Activated CD4-positive, alpha-beta T cell treated with anti-CD3 and anti-CD28 coated beads, Interleukin-2, amount 10 ng/mL, durations not matched to agents 24 days and 14 days (primary cell): ENCODE measurements at regions of chrX and their contacts with region 1.

Region 1: DNA sequence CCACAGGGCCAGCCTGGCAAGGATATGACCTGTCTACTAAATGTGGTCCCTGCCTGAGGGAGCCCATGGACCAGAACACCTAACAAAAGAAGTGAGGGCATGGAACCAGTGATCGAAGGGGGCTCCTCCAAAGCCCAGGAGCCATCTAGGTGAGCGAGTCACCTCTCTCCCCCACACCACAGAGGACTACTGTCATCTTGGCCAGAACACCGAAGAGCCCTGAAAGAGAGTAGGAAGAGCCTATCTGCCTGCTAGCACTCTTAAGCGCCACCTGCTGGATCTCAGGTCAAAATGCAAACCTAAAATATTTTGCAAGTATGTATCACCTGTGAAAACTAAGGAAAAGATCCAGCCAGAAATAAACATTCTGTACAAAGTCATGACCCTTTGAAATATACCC is 137.9 kb upstream of the ZXDB start:
- DNase-seq: peak; percentile 67
- H3K4me3 Mint-ChIP-seq: no peak overlapping the region
- H3K27ac Mint-ChIP-seq: no peak overlapping the region
- H3K4me1 Mint-ChIP-seq: peaks cover 4% of the 10 kb centered on the region
- H3K27me3 Mint-ChIP-seq: no peaks in the 10 kb centered on the region

Region 2: GRCh38 chrX:56802921-56803849 is 650.7 kb before region 1 on chrX:
- intact Hi-C with region 1: loop called (anchors 5 kb)
- DNase-seq: peak; percentile 86
- H3K4me3 Mint-ChIP-seq: peak overlapping the region; percentile 55
- H3K27ac Mint-ChIP-seq: peak overlapping the region; percentile 81
- H3K4me1 Mint-ChIP-seq: peaks cover 34% of the 10 kb centered on the region
- H3K27me3 Mint-ChIP-seq: no peaks in the 10 kb centered on the region

Region 3: DNA sequence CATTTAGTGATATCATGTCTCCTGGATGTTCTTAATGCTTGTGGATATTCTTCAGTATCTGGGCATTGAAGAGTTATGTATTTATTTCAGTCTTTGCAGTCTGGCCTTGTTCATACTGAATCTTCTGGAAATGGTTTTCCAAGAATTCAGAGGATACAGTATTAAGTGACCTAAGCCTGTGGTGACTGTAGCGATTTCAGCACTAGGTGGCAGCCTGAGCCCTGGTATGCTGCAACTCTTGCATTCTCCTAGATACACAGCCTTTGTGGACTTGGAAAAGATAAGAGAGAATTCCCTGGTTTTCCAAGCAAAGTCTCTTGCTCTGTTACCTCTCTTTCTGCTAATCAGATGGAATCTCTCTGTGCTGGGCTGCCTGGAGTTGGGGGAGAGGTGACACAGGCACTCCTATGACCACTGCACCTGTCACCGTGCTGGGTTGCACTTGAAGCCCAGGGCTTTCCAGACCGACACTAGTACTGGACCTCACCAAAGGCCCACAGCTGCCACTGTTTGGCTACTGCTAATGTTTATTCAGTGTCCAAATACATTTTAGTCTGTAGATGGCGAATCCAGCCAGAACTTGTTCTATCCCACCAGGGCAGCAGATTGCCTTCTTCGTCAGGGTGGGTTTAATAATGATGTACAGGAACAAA is 297.4 kb before region 1 on chrX:
- intact Hi-C with region 1: loop called (anchors 2 kb)
- DNase-seq: no peak
- H3K4me3 Mint-ChIP-seq: no peak overlapping the region
- H3K27ac Mint-ChIP-seq: no peak overlapping the region
- H3K4me1 Mint-ChIP-seq: no peaks in the 10 kb centered on the region
- H3K27me3 Mint-ChIP-seq: no peaks in the 10 kb centered on the region

Region 4: DNA sequence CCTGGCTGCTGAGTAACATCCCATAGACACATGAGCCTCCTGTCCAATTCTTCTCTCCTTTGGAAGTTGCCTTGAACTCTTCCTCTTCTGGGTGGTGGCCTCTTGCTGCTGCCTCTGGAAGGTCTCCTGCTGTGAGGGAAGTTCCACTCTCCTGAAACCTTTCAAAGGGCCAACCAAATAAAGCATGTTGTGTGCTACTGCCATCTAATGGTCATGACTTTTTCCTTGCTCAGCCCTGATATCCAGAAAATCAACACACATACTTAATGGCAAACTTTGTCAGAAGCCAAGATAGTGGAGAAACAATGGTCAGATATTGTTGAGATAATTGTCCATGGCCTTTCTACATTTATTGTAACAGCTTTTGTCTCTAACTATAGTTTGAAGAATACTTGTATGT is 475.5 kb after region 1 on chrX:
- intact Hi-C with region 1: loop called (anchors 10 kb)
- DNase-seq: peak; percentile 60
- H3K4me3 Mint-ChIP-seq: no peak overlapping the region
- H3K27ac Mint-ChIP-seq: no peak overlapping the region
- H3K4me1 Mint-ChIP-seq: peaks cover 6% of the 10 kb centered on the region
- H3K27me3 Mint-ChIP-seq: no peaks in the 10 kb centered on the region